ENCODE measurements at regions of chr18 and their contacts with region 1.

Region 1: GRCh38 chr18:59837586-59837985 is 62.2 kb upstream of the PMAIP1 start:
- DNase-seq: peak; percentile 72
- CTCF ChIP-seq: peak; percentile 92

Region 2: GRCh38 chr18:59286341-59286740 is 551.2 kb before region 1 on chr18:
- CTCF ChIA-PET with region 1: no interaction called
- POLR2A ChIA-PET with region 1: no interaction called
- DNase-seq: no peak
- CTCF ChIP-seq: no peak

Region 3: DNA sequence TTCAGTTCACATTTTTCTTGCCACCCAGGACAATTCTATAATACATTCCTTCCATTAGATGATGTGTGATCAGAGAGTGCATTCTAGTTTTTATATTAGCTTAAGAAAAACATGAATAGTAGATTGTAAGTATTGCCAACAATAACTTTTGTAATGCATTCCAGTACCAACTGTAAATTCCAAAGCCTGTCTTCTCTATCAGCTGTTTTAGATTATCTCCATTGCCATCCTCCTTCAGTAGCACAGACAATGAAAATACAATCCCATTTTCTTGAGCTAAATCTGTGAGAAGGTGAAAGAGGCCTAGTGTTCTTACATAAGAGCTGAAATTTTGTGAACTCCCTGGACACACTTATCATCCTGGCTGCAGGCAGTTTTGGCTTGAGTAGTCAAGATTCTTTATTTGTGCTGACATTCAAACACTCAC is 244.3 kb before region 1 on chr18:
- CTCF ChIA-PET with region 1: no interaction called
- POLR2A ChIA-PET with region 1: no interaction called
- DNase-seq: no peak
- CTCF ChIP-seq: no peak

Region 4: GRCh38 chr18:59876310-59876626 is 38.7 kb after region 1 on chr18:
- CTCF ChIA-PET with region 1: interaction called, 12 read pairs
- POLR2A ChIA-PET with region 1: no interaction called
- DNase-seq: peak; percentile 58
- CTCF ChIP-seq: no peak

Region 5: DNA sequence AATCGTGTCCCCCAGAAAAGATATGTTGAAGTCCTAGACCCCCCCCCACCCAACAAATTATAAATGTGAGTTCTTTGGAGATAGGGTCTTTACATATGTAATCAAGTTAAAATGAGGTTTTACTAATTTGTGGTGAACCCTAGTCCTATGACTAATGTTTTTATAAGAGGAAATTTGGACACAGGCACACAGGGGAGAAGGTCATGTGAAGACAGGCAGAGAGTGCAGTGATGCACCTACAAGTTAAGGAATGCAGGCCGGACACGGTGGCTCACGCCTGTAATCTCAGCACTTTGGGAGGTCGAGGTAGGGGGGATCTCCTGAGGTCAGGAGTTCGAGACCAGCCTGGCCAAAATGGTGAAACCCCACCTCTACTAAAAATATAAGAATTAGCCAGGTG is 56.4 kb after region 1 on chr18:
- CTCF ChIA-PET with region 1: interaction called, 34 read pairs
- POLR2A ChIA-PET with region 1: interaction called, 31 read pairs
- DNase-seq: no peak
- CTCF ChIP-seq: no peak

Region 6: GRCh38 chr18:59988098-59988706 is 150.6 kb after region 1 on chr18:
- CTCF ChIA-PET with region 1: interaction called, 17 read pairs
- POLR2A ChIA-PET with region 1: no interaction called
- DNase-seq: peak; percentile 47
- CTCF ChIP-seq: peak; percentile 88

Region 7: DNA sequence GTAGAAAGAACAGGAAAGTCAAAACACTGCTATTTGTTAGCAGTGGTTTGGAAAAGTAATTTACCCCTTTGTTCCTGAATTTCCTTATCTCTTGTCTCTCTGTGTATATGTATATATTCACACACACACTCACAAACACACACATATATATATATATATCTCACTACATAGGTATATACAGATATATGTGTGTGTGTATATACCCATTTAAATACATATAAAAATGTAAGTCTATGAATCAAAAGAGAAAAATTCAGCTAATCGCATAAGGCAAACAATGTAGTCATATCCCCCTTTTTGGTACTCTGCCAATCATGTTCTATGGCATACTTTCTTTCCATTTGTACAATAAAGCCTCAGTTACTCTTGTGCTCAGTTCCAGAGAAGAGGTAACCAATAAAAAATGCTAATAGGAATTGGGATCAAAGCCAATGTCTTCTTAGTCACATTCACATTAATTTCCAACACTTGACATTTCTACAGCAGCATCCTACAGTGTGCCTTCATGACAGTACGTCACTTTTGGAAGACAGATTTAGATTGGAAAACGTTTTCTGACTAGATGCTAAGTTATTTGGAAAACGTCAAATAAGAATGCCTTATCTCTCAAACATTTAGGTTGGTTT is 440.4 kb after region 1 on chr18:
- CTCF ChIA-PET with region 1: no interaction called
- POLR2A ChIA-PET with region 1: no interaction called
- DNase-seq: no peak
- CTCF ChIP-seq: no peak

Measured in GM10248 (cell line).